ENCODE measurements at regions of chr2 and their contacts with region 1.

Region 1: DNA sequence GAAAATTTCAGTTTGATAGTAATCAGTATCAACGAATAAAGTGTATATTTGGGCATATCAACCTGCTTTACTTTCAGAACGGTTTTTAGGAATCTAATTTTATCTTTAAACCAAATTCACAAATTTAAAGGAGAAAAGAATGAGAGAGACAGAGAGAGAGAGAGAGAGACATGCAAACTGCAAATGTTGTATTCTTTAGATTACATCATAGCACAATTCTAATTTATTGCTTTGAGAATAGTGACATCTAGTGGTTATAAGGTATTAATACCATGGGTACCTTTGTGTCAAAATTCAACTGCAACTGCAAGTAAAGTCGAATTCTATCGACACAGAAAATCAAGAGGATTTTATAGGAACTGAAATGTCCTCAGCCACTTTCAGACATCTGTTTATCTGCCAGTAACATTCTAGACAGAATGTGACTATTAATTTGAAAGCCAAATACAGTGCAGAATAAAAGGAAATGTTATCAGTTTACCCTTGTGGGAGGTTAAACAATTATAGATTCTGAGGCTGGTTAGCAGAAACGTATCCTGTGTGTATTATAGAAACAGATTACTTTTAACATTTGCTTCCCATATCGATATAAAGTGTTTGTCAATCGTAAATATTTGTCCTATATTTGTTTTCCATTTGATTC is 529.8 kb upstream of the VRK2 start:
- DNase-seq: peak; percentile 47
- ATAC-seq: peak; percentile 53
- H3K4me3 ChIP-seq: no peak overlapping the region
- H3K27ac ChIP-seq: no peak overlapping the region
- H3K4me1 ChIP-seq: no peaks in the 10 kb centered on the region
- H3K27me3 ChIP-seq: no peaks in the 10 kb centered on the region
- CTCF ChIP-seq: peak; percentile 60
- POLR2A ChIP-seq: no peak
- RAD21 ChIP-seq: peak; percentile 67

Region 2: GRCh38 chr2:56132138-56132537 is 1384.7 kb before region 1 on chr2:
- CTCF ChIA-PET with region 1: no interaction called
- POLR2A ChIA-PET with region 1: no interaction called
- dilution Hi-C with region 1: no loop called
- in situ Hi-C with region 1: no loop called
- intact Hi-C with region 1: loop called (anchors 5 kb)
- DNase-seq: peak; percentile 47
- ATAC-seq: peak; percentile 51; the same call in 1 of the 2 replicates
- H3K4me3 ChIP-seq: no peak overlapping the region
- H3K27ac ChIP-seq: no peak overlapping the region
- H3K4me1 ChIP-seq: no peaks in the 10 kb centered on the region
- H3K27me3 ChIP-seq: 0 out of 2 replicates have a peak, but pooled peaks cover 2% of the 10 kb centered on the region
- CTCF ChIP-seq: peak; percentile 69
- POLR2A ChIP-seq: no peak
- RAD21 ChIP-seq: peak; percentile 66

Measured in IMR-90 (cell line).